MCF 10A (cell line): ENCODE measurements at regions of chr11 and their contacts with region 1.

Region 1: DNA sequence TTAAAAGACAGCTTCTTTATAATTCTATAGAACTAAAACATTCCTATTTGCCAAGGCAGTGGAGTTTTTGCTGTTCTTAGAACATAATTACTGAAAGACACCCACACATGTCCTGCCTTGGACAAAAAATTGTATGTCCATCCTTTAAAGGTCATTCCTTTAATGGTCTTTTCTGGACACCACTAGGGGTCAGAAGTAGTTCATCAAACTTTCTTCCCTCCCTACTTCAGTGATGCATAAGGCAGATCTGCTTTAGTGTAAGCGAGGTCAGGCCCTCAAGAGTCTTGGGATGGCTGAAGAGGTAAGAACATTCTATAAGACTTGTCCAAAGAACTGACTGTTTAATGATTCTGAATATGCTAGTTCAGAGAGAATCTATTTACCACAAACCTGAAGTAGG is 4.3 kb upstream of the OR51V1 start:
- DNase-seq: peak; percentile 63
- H3K4me3 Mint-ChIP-seq: no peak overlapping the region
- H3K27ac Mint-ChIP-seq: no peak overlapping the region
- H3K4me1 Mint-ChIP-seq: peaks cover 5% of the 10 kb centered on the region
- H3K27me3 Mint-ChIP-seq: peaks cover 39% of the 10 kb centered on the region
- CTCF ChIP-seq: peak; percentile 58

Region 2: GRCh38 chr11:5065027-5065426 is 139.8 kb before region 1 on chr11:
- CTCF ChIA-PET with region 1: no interaction called
- POLR2A ChIA-PET with region 1: no interaction called
- intact Hi-C with region 1: no loop called
- DNase-seq: no peak
- H3K4me3 Mint-ChIP-seq: no peak overlapping the region
- H3K27ac Mint-ChIP-seq: no peak overlapping the region
- H3K4me1 Mint-ChIP-seq: no peaks in the 10 kb centered on the region
- H3K27me3 Mint-ChIP-seq: peaks cover 33% of the 10 kb centered on the region
- CTCF ChIP-seq: no peak

Region 3: GRCh38 chr11:5123802-5124521 is 80.8 kb before region 1 on chr11:
- CTCF ChIA-PET with region 1: interaction called, 4 read pairs
- POLR2A ChIA-PET with region 1: no interaction called
- intact Hi-C with region 1: loop called (anchors 2 kb)
- DNase-seq: peak; percentile 74
- H3K4me3 Mint-ChIP-seq: no peak overlapping the region
- H3K27ac Mint-ChIP-seq: no peak overlapping the region
- H3K4me1 Mint-ChIP-seq: no peaks in the 10 kb centered on the region
- H3K27me3 Mint-ChIP-seq: peaks cover 62% of the 10 kb centered on the region
- CTCF ChIP-seq: peak; percentile 80

Region 4: DNA sequence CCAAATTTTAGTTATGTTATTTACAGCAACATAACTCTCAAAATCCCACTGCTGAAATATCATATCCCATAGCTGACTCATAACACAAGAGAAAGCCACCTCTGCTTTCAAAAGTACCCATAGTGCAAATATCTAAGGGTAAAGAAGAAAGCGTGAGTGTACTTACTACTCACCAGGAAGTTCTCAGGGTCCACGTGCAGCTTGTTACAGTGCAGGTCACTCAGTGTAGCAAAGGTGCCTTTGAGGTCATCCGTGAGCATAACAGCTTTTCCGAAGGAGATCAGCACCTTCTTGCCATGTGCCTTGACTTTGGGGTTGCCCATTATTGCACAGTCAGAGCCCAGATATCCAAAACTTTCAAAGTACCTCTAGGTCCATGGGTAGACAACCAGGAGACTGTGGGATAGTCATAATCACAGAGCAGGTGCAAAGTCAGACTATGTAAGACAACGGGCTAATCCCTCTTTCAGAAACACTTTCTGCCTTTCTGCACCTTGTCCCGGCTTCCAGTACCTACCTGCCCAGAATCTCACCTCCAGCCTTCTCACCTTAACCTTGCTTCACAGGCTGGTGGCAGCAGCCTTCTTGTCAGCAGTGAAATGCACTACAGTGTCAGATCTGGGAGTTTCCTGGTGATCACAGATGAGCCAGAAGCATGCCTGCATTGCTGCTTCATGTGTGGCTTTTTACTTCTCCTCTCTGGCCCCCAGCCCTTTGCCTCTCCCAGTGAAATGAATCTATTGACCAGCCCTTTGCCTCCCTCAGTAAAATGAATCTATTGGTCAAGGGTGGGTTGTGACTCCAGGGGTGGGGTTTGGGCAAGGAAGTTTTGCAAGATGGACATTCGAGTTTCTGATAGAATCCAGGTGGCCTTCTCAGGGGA is 38.4 kb after region 1 on chr11:
- CTCF ChIA-PET with region 1: no interaction called
- POLR2A ChIA-PET with region 1: no interaction called
- intact Hi-C with region 1: no loop called
- DNase-seq: no peak
- H3K4me3 Mint-ChIP-seq: no peak overlapping the region
- H3K27ac Mint-ChIP-seq: no peak overlapping the region
- H3K4me1 Mint-ChIP-seq: no peaks in the 10 kb centered on the region
- H3K27me3 Mint-ChIP-seq: peaks cover 44% of the 10 kb centered on the region
- CTCF ChIP-seq: no peak